AG04449 (cell line): ENCODE measurements at regions of chr18 and their contacts with region 1.

Region 1: GRCh38 chr18:3995476-3996102 is 459.5 kb downstream of the DLGAP1 start:
- DNase-seq: no peak
- H3K4me3 ChIP-seq: no peak overlapping the region
- CTCF ChIP-seq: peak; percentile 72

Region 2: GRCh38 chr18:3703732-3704176 is 291.8 kb before region 1 on chr18:
- CTCF ChIA-PET with region 1: interaction called, 41 read pairs
- POLR2A ChIA-PET with region 1: no interaction called
- DNase-seq: peak; percentile 12
- H3K4me3 ChIP-seq: no peak overlapping the region
- CTCF ChIP-seq: peak; percentile 81

Region 3: DNA sequence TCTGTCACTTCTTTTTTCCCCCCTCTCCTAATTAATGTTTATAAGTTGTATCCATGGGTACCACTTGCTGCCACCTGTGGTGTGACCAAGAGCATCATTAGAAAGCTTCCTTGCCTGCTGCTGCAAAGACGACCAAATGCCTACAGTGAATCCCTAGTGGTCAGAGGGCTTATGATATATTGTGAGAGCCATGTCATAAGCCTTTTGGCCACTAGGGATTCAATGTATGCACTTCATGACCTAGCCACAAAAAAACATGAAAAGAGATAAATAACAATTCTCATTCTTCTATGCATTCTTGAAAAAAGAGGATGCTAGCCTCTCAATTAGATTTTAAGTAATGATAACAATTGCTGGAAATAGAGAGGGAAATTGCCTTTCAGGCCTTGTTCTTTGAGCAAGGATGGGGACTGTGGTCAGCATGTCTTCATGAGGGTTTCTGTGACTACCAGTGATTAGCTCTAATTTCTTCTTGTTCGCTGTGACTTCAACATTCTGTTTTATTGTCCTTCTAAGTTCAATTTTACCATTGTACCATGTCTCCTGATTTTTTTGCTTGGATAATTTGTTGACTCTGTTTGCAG is 110.3 kb before region 1 on chr18:
- CTCF ChIA-PET with region 1: interaction called, 15 read pairs
- POLR2A ChIA-PET with region 1: no interaction called
- DNase-seq: no peak
- H3K4me3 ChIP-seq: no peak overlapping the region
- CTCF ChIP-seq: peak; percentile 3

Region 4: GRCh38 chr18:3903337-3903736 is 92.3 kb before region 1 on chr18:
- CTCF ChIA-PET with region 1: interaction called, 11 read pairs
- POLR2A ChIA-PET with region 1: no interaction called
- DNase-seq: peak; percentile 87
- H3K4me3 ChIP-seq: no peak overlapping the region
- CTCF ChIP-seq: no peak

Region 5: GRCh38 chr18:3921826-3922225 is 73.8 kb before region 1 on chr18:
- CTCF ChIA-PET with region 1: interaction called, 10 read pairs
- POLR2A ChIA-PET with region 1: no interaction called
- DNase-seq: no peak
- H3K4me3 ChIP-seq: no peak overlapping the region
- CTCF ChIP-seq: no peak

Region 6: GRCh38 chr18:3983351-3983969 is 12.1 kb before region 1 on chr18:
- CTCF ChIA-PET with region 1: interaction called, 63 read pairs
- POLR2A ChIA-PET with region 1: no interaction called
- DNase-seq: peak; percentile 47
- H3K4me3 ChIP-seq: no peak overlapping the region
- CTCF ChIP-seq: no peak

Region 7: DNA sequence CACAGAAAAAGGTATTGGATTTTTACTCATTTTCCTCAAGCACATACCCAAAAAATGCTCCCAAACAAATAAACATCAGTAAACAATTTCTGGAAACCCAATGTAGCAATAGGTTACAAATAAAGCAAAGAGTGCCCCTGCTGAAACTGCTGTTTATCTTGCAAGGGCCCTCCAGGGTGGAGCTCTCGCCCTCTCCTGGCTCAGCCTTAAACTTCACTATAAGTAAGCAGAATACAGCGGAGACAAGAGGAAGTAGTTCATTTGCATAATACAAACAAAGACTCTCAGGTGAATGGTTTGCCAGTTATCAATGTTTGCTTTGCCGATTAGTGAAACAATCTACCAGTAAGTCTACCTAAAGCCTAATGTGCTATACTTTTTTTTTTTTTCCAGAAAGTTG is 21.9 kb after region 1 on chr18:
- CTCF ChIA-PET with region 1: interaction called, 10 read pairs
- POLR2A ChIA-PET with region 1: no interaction called
- DNase-seq: no peak
- H3K4me3 ChIP-seq: no peak overlapping the region
- CTCF ChIP-seq: no peak